K562 (cell line): ENCODE measurements at regions of chr14 and their contacts with region 1.

Region 1: GRCh38 chr14:64338616-64339316 is 44.6 kb upstream of the ESR2 start:
- DNase-seq: peak; percentile 94 to 96 (median 94)
- ATAC-seq: peak; percentile 90
- H3K4me3 ChIP-seq: peak overlapping the region; percentile 63
- H3K27ac ChIP-seq: peak overlapping the region; percentile 83
- H3K4me1 ChIP-seq: peaks cover 3 to 6% of the 10 kb centered on the region in 2 experiments; a peak in 3 of 5 replicates
- H3K27me3 ChIP-seq: no peaks in the 10 kb centered on the region
- CTCF ChIP-seq: no peak
- EP300 ChIP-seq: no peak
- POLR2A ChIP-seq: peak; percentile 82
- RAD21 ChIP-seq: no peak

Region 2: DNA sequence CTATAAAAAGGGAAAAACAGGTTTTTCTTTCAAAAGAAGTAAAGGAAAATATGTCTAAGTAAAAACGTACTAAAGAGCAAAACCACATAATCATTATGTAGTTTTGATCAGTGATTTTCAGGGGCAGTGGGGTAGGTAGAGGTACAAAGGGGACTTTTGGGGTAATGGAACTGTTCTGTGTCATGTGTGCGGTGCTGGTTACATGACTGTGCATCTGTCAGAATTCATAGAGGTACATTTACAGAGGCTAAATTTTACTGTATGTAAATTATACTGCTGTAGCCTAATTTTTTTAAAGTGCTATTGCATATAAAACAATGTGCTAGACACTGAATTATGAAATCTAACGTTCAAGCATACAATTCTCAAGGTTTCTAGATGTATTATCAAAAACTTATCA is 46.6 kb before region 1 on chr14:
- CTCF ChIA-PET with region 1: no interaction called
- POLR2A ChIA-PET with region 1: no interaction called
- in situ Hi-C with region 1: no loop called
- intact Hi-C with region 1: no loop called
- DNase-seq: no peak
- ATAC-seq: no peak
- H3K4me3 ChIP-seq: no peak overlapping the region
- H3K27ac ChIP-seq: no peak overlapping the region
- H3K4me1 ChIP-seq: peaks cover 0 to 12% of the 10 kb centered on the region in 2 experiments; a peak in 2 of 5 replicates
- H3K27me3 ChIP-seq: no peaks in the 10 kb centered on the region
- CTCF ChIP-seq: no peak
- EP300 ChIP-seq: no peak
- POLR2A ChIP-seq: no peak
- RAD21 ChIP-seq: no peak

Region 3: DNA sequence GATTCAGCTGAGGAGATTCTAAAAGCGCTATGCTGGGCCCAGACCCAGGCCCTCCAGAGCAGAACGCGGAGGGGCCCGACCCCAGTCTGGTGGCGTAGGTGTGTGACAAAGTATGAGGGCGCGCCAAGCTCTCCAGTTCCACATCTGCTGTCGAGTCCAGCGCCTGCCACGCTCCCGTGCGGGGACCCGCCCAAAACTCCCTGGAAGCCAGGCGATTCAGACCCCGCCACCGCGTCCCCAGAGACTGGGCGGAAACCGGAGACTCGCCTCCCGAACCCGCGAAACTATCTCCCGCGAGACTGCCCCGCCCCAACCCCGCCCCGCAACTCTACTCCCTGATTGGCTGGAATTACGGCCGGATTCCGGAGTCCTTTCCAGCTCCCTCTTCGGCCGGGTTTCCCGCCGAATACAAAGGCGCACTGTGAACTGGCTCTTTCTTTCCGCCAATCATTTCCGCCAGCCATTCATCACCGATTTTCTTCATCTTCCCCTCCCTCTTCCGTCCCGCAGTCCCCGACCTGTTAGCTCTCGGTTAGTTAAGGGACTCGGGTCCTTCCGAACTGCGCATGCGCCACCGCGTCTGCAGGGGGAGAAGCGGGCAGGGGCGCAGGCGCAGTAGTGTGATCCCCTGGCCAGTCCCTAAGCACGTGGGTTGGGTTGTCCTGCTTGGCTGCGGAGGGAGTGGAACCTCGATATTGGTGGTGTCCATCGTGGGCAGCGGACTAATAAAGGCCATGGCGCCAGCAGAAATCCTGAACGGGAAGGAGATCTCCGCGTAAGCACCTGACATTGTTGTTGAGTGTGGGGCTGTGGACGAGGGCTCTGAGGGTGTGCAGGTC is 49.1 kb after region 1 on chr14 and contains the start of gene MTHFD1:
- CTCF ChIA-PET with region 1: no interaction called
- POLR2A ChIA-PET with region 1: interaction called, 3 read pairs
- in situ Hi-C with region 1: no loop called
- intact Hi-C with region 1: loop called (anchors 2 kb)
- DNase-seq: peak; percentile 96 to 97 (median 96)
- ATAC-seq: peak; percentile 90
- H3K4me3 ChIP-seq: peak within 1 kb of the TSS; percentile 59
- H3K27ac ChIP-seq: peak within 1 kb of the TSS; percentile 94
- H3K4me1 ChIP-seq: peaks cover 9 to 20% of the 10 kb centered on the region in 2 experiments; a peak in 4 of 5 replicates
- H3K27me3 ChIP-seq: no peaks in the 10 kb centered on the region
- CTCF ChIP-seq: no peak
- EP300 ChIP-seq: no peak
- POLR2A ChIP-seq: peak; percentile 81
- RAD21 ChIP-seq: no peak
- polyA plus RNA-seq, gene MTHFD1: 90.9 to 147 TPM

Region 4: GRCh38 chr14:64421166-64421565 is 82.4 kb after region 1 on chr14:
- CTCF ChIA-PET with region 1: no interaction called
- POLR2A ChIA-PET with region 1: interaction called, 3 read pairs
- in situ Hi-C with region 1: no loop called
- intact Hi-C with region 1: loop called (anchors 10 kb)
- DNase-seq: no peak
- ATAC-seq: no peak
- H3K4me3 ChIP-seq: no peak overlapping the region
- H3K27ac ChIP-seq: no peak overlapping the region
- H3K4me1 ChIP-seq: no peaks in the 10 kb centered on the region
- H3K27me3 ChIP-seq: no peaks in the 10 kb centered on the region
- CTCF ChIP-seq: no peak
- EP300 ChIP-seq: no peak
- POLR2A ChIP-seq: no peak
- RAD21 ChIP-seq: no peak

Region 5: GRCh38 chr14:64465191-64465822 is 126.5 kb after region 1 on chr14 and contains the start of gene AKAP5:
- CTCF ChIA-PET with region 1: no interaction called
- POLR2A ChIA-PET with region 1: no interaction called
- in situ Hi-C with region 1: loop called (anchors 10 kb)
- intact Hi-C with region 1: no loop called
- DNase-seq: peak; percentile 60 to 88 (median 82)
- ATAC-seq: peak; percentile 94
- H3K4me3 ChIP-seq: peak within 1 kb of the TSS; percentile 57
- H3K27ac ChIP-seq: no peak within 1 kb of the TSS
- H3K4me1 ChIP-seq: peaks cover 8 to 9% of the 10 kb centered on the region in 2 experiments; a peak in 4 of 5 replicates
- H3K27me3 ChIP-seq: no peaks in the 10 kb centered on the region
- CTCF ChIP-seq: no peak
- EP300 ChIP-seq: no peak
- POLR2A ChIP-seq: no peak
- RAD21 ChIP-seq: no peak
- polyA plus RNA-seq, gene AKAP5: 0.06 to 0.07 TPM

Region 6: GRCh38 chr14:64478634-64479250 is 140.0 kb after region 1 on chr14:
- CTCF ChIA-PET with region 1: interaction called, 13 read pairs
- POLR2A ChIA-PET with region 1: no interaction called
- in situ Hi-C with region 1: no loop called
- intact Hi-C with region 1: no loop called
- DNase-seq: no peak
- ATAC-seq: no peak
- H3K4me3 ChIP-seq: no peak overlapping the region
- H3K27ac ChIP-seq: no peak overlapping the region
- H3K4me1 ChIP-seq: no peaks in the 10 kb centered on the region
- H3K27me3 ChIP-seq: no peaks in the 10 kb centered on the region
- CTCF ChIP-seq: peak in 2 of 3 experiments; percentile 6 to 51; a peak in 3 of 6 replicates
- EP300 ChIP-seq: no peak
- POLR2A ChIP-seq: no peak
- RAD21 ChIP-seq: peak; percentile 48 to 51

Region 7: GRCh38 chr14:64503478-64504309 is 164.9 kb after region 1 on chr14 and contains the start of gene ZBTB25:
- CTCF ChIA-PET with region 1: no interaction called
- POLR2A ChIA-PET with region 1: no interaction called
- in situ Hi-C with region 1: no loop called
- intact Hi-C with region 1: no loop called
- DNase-seq: peak; percentile 71 to 86 (median 71)
- ATAC-seq: peak; percentile 87
- H3K4me3 ChIP-seq: peak within 1 kb of the TSS; percentile 64
- H3K27ac ChIP-seq: peak within 1 kb of the TSS; percentile 91
- H3K4me1 ChIP-seq: peaks cover 25 to 38% of the 10 kb centered on the region in 2 experiments
- H3K27me3 ChIP-seq: no peaks in the 10 kb centered on the region
- CTCF ChIP-seq: no peak
- EP300 ChIP-seq: no peak
- POLR2A ChIP-seq: peak; percentile 72
- RAD21 ChIP-seq: no peak
- polyA plus RNA-seq, gene ZBTB25: 0.61 to 0.92 TPM

Region 8: GRCh38 chr14:64636208-64636979 is 297.6 kb after region 1 on chr14:
- CTCF ChIA-PET with region 1: interaction called, 6 read pairs
- POLR2A ChIA-PET with region 1: interaction called, 4 read pairs
- in situ Hi-C with region 1: loop called (anchors 10 kb)
- intact Hi-C with region 1: loop called (anchors 5 kb)
- DNase-seq: peak; percentile 54 to 75 (median 69)
- ATAC-seq: peak; percentile 97
- H3K4me3 ChIP-seq: no peak overlapping the region
- H3K27ac ChIP-seq: no peak overlapping the region
- H3K4me1 ChIP-seq: no peaks in the 10 kb centered on the region
- H3K27me3 ChIP-seq: peaks cover 4 to 19% of the 10 kb centered on the region in 2 experiments; a peak in 3 of 5 replicates
- CTCF ChIP-seq: peak; percentile 78 to 95 (median 78)
- EP300 ChIP-seq: no peak
- POLR2A ChIP-seq: no peak
- RAD21 ChIP-seq: peak; percentile 48 to 70